Activated naive CD4-positive, alpha-beta T cell treated with anti-CD3 and anti-CD28 coated beads for 36 hours (primary cell): ENCODE measurements at regions of chr1 and their contacts with region 1.

Region 1: DNA sequence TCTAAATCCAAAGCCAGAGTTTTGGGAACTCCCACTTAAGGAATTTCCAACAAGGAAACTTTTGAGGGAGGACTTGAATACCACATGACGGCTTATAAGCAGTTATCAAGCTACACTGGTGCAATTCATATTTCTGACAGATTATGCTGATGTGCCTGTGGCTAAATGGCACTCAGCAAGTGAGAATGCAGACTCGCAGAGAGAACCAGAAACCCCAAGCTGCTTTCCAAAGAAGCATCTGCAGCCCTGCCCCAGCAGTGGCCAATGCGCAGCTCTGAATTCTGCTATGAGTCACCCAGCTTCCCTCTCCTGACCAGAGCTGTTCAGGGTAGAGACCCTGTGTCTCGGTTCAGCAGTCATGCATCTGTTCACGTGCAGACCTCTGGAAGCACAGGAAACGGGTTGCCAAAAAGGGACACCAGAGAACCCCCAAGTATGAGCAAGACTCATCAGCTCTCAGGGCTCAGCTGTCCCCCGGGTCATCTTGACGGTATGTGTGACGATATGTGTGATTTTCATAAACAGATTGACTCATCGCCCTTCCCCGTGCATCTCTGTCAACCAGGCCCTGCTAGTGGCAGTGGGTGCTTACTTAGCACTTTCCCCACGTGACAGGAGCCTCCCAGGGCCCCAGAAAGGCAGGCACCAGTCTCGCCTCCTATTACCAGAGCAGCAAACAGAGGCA is 76.3 kb downstream of the ITPKB start:
- DNase-seq: peak; percentile 95
- H3K4me3 Mint-ChIP-seq: peak overlapping the region; percentile 43
- H3K27ac Mint-ChIP-seq: peak overlapping the region; percentile 82
- H3K4me1 Mint-ChIP-seq: peaks cover 100% of the 10 kb centered on the region
- H3K27me3 Mint-ChIP-seq: no peaks in the 10 kb centered on the region

Region 2: GRCh38 chr1:226626577-226626956 is 36.2 kb before region 1 on chr1:
- CTCF ChIA-PET with region 1: interaction called, 10 read pairs
- intact Hi-C with region 1: no loop called
- DNase-seq: peak; percentile 90
- H3K4me3 Mint-ChIP-seq: peak overlapping the region; percentile 10
- H3K27ac Mint-ChIP-seq: peak overlapping the region; percentile 68
- H3K4me1 Mint-ChIP-seq: peaks cover 25% of the 10 kb centered on the region
- H3K27me3 Mint-ChIP-seq: no peaks in the 10 kb centered on the region

Region 3: DNA sequence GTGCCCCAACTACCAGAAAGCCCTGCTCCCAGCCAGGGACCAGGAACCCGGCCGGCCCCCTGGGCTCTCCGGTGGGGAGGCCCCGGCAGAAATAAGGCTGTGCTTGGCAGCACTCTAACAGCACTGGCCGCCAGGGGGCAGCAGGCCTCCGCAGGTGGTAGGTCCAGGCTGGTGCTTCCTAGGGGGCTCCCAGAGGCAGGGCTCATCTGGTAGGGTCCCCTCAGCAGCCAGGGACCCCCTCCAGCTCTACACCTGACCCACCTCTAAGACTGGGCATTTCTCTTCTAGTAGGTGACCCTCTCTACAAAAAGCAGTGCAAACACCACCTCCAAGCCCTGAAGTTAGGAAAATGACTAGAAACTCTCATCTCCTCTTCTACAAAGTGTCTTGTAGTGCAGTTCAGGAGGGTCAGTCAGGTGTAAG is 28.6 kb before region 1 on chr1:
- CTCF ChIA-PET with region 1: interaction called, 13 read pairs
- intact Hi-C with region 1: loop called (anchors 1 kb)
- DNase-seq: peak; percentile 87
- H3K4me3 Mint-ChIP-seq: no peak overlapping the region
- H3K27ac Mint-ChIP-seq: peak overlapping the region; percentile 3
- H3K4me1 Mint-ChIP-seq: peaks cover 46% of the 10 kb centered on the region
- H3K27me3 Mint-ChIP-seq: no peaks in the 10 kb centered on the region

Region 4: GRCh38 chr1:226649780-226650179 is 13.0 kb before region 1 on chr1:
- CTCF ChIA-PET with region 1: interaction called, 9 read pairs
- intact Hi-C with region 1: loop called (anchors 1 kb)
- DNase-seq: peak; percentile 67
- H3K4me3 Mint-ChIP-seq: no peak overlapping the region
- H3K27ac Mint-ChIP-seq: no peak overlapping the region
- H3K4me1 Mint-ChIP-seq: peaks cover 53% of the 10 kb centered on the region
- H3K27me3 Mint-ChIP-seq: no peaks in the 10 kb centered on the region

Region 5: DNA sequence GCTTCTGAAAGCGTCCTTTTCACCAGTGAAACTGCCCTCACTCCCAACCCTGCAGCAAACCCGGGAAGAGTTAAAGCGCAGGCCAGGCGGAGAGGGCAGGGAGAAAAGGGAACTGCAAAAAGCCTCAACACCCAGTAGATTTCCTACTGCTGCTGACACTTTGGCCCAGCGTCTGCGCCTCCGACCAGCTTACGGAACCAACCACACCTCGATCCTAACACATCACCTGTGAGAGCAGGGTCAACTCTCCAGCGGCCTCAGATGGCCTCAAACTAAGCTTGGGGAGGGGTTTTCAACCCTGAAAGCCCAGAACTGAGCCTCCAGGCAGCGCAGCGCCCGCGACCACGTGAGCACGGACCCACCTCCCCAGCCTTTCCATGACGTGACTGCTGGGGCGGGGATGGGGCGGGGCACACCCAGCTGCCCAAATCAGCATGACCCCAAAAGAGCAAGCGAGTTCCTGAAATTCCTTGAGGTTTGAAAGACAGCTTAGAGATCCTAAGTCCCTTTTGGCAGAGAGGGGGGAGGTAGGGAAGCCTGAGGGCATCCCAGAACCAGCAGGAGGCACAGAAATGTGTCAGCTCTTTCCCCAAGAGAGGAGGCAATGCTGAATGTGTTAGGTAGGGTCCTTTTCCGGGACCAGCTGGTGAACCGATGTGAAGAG is 17.2 kb after region 1 on chr1:
- CTCF ChIA-PET with region 1: interaction called, 5 read pairs
- intact Hi-C with region 1: loop called (anchors 1 kb)
- DNase-seq: peak; percentile 84
- H3K4me3 Mint-ChIP-seq: peak overlapping the region; percentile 67
- H3K27ac Mint-ChIP-seq: peak overlapping the region; percentile 92
- H3K4me1 Mint-ChIP-seq: peaks cover 96% of the 10 kb centered on the region
- H3K27me3 Mint-ChIP-seq: no peaks in the 10 kb centered on the region

Region 6: GRCh38 chr1:226697151-226697939 is 34.6 kb after region 1 on chr1:
- CTCF ChIA-PET with region 1: interaction called, 3 read pairs
- intact Hi-C with region 1: loop called (anchors 1 kb)
- DNase-seq: peak; percentile 69
- H3K4me3 Mint-ChIP-seq: peak overlapping the region; percentile 28
- H3K27ac Mint-ChIP-seq: peak overlapping the region; percentile 96
- H3K4me1 Mint-ChIP-seq: peaks cover 93% of the 10 kb centered on the region
- H3K27me3 Mint-ChIP-seq: no peaks in the 10 kb centered on the region

Region 7: DNA sequence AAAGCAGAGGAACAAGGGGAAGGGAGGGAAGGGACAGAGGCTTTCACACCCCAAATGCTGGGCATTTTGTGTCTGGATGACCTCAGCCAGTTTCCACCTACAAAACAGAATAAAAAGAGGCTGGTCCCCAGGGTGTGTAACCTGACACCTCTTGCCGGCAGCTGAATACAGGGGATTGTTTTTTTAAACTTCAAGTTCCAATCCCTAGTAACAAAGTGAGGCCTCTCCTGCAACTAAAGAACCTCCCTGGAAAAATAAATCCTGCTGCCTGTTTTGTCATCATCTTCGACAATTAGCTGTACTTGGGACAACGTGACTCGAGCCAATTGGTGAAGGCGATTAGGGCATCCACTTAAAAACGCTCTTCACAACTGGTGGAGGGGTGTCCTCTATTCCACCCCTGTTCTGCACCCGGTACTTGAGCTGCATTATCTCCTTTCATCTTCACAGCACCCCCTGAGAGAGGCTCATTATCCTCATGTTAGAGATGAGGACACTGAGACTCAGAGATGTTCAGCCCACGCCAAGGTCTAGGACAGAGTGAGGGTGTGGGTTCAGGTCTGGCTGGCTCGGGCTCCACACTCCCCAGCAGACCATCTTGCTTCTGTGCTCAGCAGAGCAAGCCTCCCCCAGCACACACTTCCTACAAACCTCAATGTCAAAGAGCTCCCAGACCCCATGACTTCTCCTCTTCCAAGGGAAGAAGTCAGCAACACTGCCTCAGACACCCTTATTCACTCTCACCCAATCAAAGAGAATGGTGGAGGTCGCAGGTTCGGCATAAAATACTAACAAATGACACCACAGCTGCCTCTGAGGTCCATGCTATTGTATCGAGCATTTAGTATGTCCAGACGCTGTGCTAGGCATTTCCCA is 61.1 kb after region 1 on chr1:
- CTCF ChIA-PET with region 1: interaction called, 4 read pairs
- intact Hi-C with region 1: loop called (anchors 1 kb)
- DNase-seq: peak; percentile 51
- H3K4me3 Mint-ChIP-seq: peak overlapping the region; percentile 86
- H3K27ac Mint-ChIP-seq: peak overlapping the region; percentile 98
- H3K4me1 Mint-ChIP-seq: peaks cover 92% of the 10 kb centered on the region
- H3K27me3 Mint-ChIP-seq: no peaks in the 10 kb centered on the region